ENCODE measurements at regions of chr5 and their contacts with region 1.

Region 1: DNA sequence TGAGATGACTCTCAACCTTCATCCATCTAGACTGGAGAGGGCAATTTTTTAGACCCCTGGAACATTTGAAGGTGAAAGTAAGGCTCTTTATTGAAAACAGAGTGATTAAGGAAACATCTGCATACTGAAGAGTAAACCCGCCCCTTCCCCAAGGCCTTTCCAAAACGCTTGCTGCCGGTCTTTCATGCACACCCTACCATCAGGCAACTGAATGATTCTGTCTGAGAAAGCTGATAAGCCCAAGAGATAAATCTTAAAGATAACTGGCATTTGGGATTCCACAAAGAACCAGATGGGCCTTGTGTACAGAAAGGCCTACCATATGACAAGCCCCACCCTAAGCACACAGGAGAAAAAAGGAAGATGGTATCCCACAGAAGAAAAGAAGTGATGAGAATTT is 54.4 kb upstream of the PIK3R1 start:
- DNase-seq: peak; percentile 60 to 70
- H3K4me3 ChIP-seq: no peak overlapping the region
- H3K4me3 Mint-ChIP-seq: peak overlapping the region; percentile 53
- H3K27ac Mint-ChIP-seq: peak overlapping the region; percentile 69
- H3K4me1 ChIP-seq: peaks cover 21% of the 10 kb centered on the region
- H3K4me1 Mint-ChIP-seq: peaks cover 24% of the 10 kb centered on the region
- H3K27me3 ChIP-seq: no peaks in the 10 kb centered on the region
- H3K27me3 Mint-ChIP-seq: no peaks in the 10 kb centered on the region
- CTCF ChIP-seq: no peak

Region 2: GRCh38 chr5:68141494-68141893 is 19.7 kb before region 1 on chr5:
- CTCF ChIA-PET with region 1: no interaction called
- POLR2A ChIA-PET with region 1: no interaction called
- intact Hi-C with region 1: no loop called
- DNase-seq: no peak
- H3K4me3 ChIP-seq: no peak overlapping the region
- H3K4me3 Mint-ChIP-seq: no peak overlapping the region
- H3K27ac Mint-ChIP-seq: no peak overlapping the region
- H3K4me1 ChIP-seq: no peaks in the 10 kb centered on the region; the same call in 1 of the 2 replicates
- H3K4me1 Mint-ChIP-seq: peaks cover 6% of the 10 kb centered on the region
- H3K27me3 ChIP-seq: no peaks in the 10 kb centered on the region
- H3K27me3 Mint-ChIP-seq: no peaks in the 10 kb centered on the region
- CTCF ChIP-seq: no peak

Region 3: GRCh38 chr5:68178579-68178978 is 17.4 kb after region 1 on chr5:
- CTCF ChIA-PET with region 1: no interaction called
- POLR2A ChIA-PET with region 1: no interaction called
- intact Hi-C with region 1: no loop called
- DNase-seq: no peak
- H3K4me3 ChIP-seq: no peak overlapping the region
- H3K4me3 Mint-ChIP-seq: no peak overlapping the region
- H3K27ac Mint-ChIP-seq: no peak overlapping the region
- H3K4me1 ChIP-seq: peaks cover 23% of the 10 kb centered on the region; the same call in 1 of the 2 replicates
- H3K4me1 Mint-ChIP-seq: peaks cover 14% of the 10 kb centered on the region
- H3K27me3 ChIP-seq: no peaks in the 10 kb centered on the region
- H3K27me3 Mint-ChIP-seq: no peaks in the 10 kb centered on the region
- CTCF ChIP-seq: no peak

Region 4: GRCh38 chr5:68192674-68193060 is 31.5 kb after region 1 on chr5:
- CTCF ChIA-PET with region 1: no interaction called
- POLR2A ChIA-PET with region 1: no interaction called
- intact Hi-C with region 1: loop called (anchors 1 kb)
- DNase-seq: no peak
- H3K4me3 ChIP-seq: no peak overlapping the region
- H3K4me3 Mint-ChIP-seq: peak overlapping the region; percentile 17
- H3K27ac Mint-ChIP-seq: peak overlapping the region; percentile 33
- H3K4me1 ChIP-seq: peaks cover 37% of the 10 kb centered on the region
- H3K4me1 Mint-ChIP-seq: peaks cover 21% of the 10 kb centered on the region
- H3K27me3 ChIP-seq: no peaks in the 10 kb centered on the region
- H3K27me3 Mint-ChIP-seq: no peaks in the 10 kb centered on the region
- CTCF ChIP-seq: no peak